Right cardiac atrium (tissue), 5 donors: ENCODE measurements at regions of chr10 and their contacts with region 1.

Region 1: DNA sequence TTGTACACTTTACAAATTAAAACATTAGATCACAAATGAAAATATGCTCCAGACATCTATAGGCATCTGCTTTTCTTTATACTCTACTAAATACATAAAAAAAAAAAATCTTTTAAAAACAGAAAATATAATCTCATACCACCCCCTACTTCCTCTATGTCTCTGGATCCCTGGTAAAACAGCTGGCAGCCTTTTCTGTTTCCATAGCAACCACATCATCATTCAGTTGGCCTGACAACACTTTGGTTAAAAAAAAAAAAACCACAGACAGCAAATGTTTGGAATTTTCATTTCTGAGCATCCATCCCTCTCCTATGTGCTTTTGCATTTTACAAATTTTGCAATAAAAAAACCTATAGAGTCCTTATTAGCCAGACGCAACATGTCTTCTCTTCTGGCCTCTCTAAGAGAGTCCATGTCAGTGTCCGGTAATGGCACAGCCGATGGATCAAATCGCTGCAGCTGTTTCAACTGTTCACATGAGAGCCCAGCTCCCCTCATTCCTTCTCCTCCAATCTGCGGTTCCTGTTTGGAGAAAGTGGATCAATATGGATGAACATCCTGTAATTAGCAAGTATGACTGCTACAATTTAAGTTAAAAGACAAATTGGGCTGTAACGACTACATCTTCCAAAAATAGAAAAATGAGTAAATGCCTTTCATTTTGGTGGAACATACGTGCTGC is 105.6 kb downstream of the NSUN6 start:
- DNase-seq: no peak
- ATAC-seq: no peak
- H3K4me3 ChIP-seq: no peak overlapping the region
- H3K27ac ChIP-seq: no peak overlapping the region
- H3K4me1 ChIP-seq: no peaks in the 10 kb centered on the region
- H3K27me3 ChIP-seq: no peaks in the 10 kb centered on the region

Region 2: GRCh38 chr10:18437486-18437885 is 108.3 kb before region 1 on chr10:
- intact Hi-C with region 1: no loop called
- DNase-seq: no peak
- ATAC-seq: no peak
- H3K4me3 ChIP-seq: no peak overlapping the region
- H3K27ac ChIP-seq: no peak overlapping the region
- H3K4me1 ChIP-seq: peaks cover 1% of the 10 kb centered on the region
- H3K27me3 ChIP-seq: no peaks in the 10 kb centered on the region

Region 3: GRCh38 chr10:18532881-18533535 is 12.8 kb before region 1 on chr10:
- intact Hi-C with region 1: loop called in 1 of 4 experiments (anchors 1 kb)
- DNase-seq: no peak
- ATAC-seq: no peak
- H3K4me3 ChIP-seq: no peak overlapping the region
- H3K27ac ChIP-seq: no peak overlapping the region
- H3K4me1 ChIP-seq: peaks cover 2% of the 10 kb centered on the region
- H3K27me3 ChIP-seq: no peaks in the 10 kb centered on the region

Region 4: DNA sequence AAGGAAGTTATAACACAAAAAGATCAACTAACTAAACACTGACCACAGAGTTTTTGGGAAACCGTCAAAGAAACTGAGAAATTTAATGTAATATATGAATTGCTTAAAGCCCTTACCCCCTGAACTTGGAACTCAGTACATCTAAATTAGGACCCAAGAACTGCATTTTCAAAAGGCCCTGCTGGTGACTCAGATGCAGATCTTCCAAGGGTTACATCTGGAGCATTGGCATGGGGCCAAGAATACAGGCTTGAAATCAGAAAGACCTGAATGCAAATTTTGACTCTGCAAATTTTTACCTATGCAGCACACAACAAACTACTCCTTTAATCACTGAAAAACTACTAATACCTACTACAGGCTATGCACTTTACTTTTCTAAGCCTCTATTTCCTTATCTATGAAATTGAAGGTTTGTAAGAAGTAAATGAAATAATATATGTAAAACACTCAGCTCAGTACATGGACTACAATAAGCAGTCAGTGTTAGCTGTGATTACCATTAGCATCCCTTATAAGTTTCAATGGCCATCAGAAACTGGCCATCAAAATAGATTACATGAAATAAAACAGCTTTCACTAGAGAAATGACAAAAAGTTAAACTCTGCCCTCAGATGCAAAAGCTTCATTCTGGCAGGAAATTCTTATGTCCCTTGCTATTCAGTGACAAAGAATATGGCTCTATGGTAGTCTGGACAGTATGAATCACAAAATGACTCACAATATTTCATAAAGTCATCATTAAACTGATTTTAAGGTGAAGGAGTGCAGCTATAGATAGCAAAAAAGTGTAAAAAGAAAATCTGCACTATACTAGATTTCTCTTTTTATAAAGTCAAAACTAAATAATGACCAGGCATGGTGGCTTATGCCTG is 62.0 kb after region 1 on chr10:
- intact Hi-C with region 1: no loop called
- DNase-seq: peak in 1 of 3 donors; percentile 43
- ATAC-seq: no peak
- H3K4me3 ChIP-seq: no peak overlapping the region
- H3K27ac ChIP-seq: no peak overlapping the region
- H3K4me1 ChIP-seq: no peaks in the 10 kb centered on the region
- H3K27me3 ChIP-seq: no peaks in the 10 kb centered on the region